ENCODE measurements at regions of chr17 and their contacts with region 1.

Region 1: GRCh38 chr17:62968445-62968923 is 2.4 kb downstream of the TANC2 start:
- DNase-seq: no peak

Region 2: DNA sequence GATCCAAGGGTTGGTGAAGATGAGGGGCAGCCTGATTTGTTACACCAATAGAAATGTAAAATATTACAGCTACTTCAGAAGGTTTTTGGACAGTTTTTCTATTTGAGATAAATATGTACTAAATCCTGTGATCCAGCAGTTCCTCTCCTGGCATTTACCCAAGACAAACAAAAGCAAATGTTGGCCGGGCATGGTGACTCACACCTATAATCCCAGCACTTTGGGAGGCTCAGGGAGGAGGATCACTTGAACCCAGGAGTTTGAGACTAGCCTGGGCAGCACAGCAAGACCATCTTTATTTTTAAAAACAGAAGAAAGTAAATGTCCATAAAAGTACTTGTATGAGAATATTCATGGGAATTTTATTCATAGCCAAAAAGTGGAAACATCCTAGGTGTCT is 405.8 kb before region 1 on chr17:
- intact Hi-C with region 1: no loop called
- DNase-seq: no peak

Region 3: GRCh38 chr17:62892870-62893338 is 75.6 kb before region 1 on chr17:
- intact Hi-C with region 1: loop called (anchors 5 kb)
- DNase-seq: peak; percentile 84

Region 4: GRCh38 chr17:62911114-62911513 is 57.4 kb before region 1 on chr17:
- intact Hi-C with region 1: no loop called
- DNase-seq: no peak

Region 5: DNA sequence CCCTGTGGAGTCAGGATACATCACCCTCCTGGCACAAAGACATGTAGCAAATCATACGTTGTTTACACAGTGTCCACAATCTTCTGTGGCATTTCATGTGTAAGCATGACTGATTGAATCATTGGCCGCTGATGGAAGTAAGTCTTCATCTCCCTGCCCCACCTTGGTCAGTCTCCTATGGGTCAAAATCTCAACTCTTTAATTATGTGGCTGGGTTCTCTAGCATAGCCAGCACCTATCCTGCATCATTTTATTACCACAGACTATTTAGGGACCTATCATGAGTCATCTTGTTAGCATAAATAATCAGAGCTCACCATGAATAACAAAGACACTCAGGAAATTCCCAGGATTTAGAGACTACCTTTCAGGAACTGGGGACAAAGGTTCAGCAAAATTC is 13.4 kb after region 1 on chr17:
- intact Hi-C with region 1: no loop called
- DNase-seq: no peak

Measured in cardiac septum (tissue), 1 donor.